MCF 10A (cell line): ENCODE measurements at regions of chr11 and their contacts with region 1.

Region 1: DNA sequence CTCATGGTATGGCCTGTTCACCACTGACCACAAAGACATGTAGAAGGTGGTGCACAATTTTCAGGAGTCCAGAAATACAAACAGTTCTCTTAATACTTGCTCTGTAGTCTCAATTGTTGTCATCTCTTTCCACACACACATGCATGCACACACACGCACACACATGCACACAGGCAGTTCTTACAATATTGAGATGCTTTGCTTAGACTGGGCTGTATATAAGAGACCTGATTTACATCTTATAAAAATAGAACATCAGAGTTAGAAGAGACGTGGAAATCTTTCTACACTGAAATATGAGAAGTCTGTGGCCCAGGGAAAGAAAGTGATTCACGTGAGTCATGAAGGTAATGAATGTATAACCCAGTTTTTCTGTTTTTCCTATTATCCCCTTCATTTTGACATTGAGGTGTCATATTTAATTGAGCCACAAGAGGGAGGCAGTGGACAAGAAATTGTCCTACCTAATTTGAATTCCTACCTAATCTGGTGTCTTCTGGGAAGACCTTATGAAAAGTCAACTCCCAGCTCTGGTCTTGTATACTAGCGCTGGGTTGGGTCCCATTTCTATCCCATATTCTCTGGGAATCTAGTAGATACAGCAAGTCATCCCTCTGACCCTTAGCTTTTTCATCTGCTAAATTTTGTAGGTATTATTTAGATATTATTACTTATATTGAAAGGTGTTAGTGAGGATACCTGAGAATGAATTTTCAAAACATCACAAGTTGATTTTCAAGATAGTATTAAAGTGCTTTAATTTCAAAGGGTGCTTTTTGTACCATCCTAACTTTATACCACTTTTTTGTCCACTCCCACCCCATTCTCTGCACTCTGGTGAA is 14.9 kb upstream of the MS4A4A start:
- DNase-seq: peak; percentile 66
- H3K4me3 Mint-ChIP-seq: no peak overlapping the region
- H3K27ac Mint-ChIP-seq: no peak overlapping the region
- H3K4me1 Mint-ChIP-seq: no peaks in the 10 kb centered on the region
- H3K27me3 Mint-ChIP-seq: peaks cover 12% of the 10 kb centered on the region
- CTCF ChIP-seq: peak; percentile 64

Region 2: DNA sequence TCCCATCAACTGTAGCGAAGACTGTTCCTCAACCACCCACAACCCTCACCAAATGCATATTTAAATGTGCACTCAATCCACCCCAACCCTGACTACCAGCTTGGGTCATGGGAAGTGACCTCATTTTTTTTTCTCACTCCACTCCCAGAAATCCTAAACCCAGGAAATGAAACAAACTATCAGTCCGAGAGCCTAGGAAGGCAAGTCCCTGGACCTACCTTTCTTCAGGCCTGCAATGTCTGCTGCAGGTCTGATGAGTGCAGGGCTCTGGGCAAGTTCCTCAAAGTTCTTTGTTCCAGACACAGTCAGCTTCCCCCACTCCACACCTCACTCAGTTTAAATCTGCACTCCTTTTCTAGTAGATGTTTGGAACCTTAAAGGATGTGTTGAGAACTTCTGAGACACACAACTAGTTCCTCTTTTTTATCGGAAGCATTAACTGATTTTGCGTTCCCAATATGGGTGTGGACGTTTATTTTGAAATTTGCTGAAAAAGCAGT is 22.8 kb before region 1 on chr11 and contains the start of gene MS4A4E:
- CTCF ChIA-PET with region 1: interaction called, 13 read pairs
- POLR2A ChIA-PET with region 1: no interaction called
- intact Hi-C with region 1: no loop called
- DNase-seq: no peak
- H3K4me3 Mint-ChIP-seq: no peak within 1 kb of the TSS
- H3K27ac Mint-ChIP-seq: no peak within 1 kb of the TSS
- H3K4me1 Mint-ChIP-seq: no peaks in the 10 kb centered on the region
- H3K27me3 Mint-ChIP-seq: peaks cover 60% of the 10 kb centered on the region
- CTCF ChIP-seq: no peak
- total RNA-seq, gene MS4A4E: not detected in 2 replicates

Region 3: GRCh38 chr11:60334005-60334620 is 68.5 kb after region 1 on chr11:
- CTCF ChIA-PET with region 1: interaction called, 11 read pairs
- POLR2A ChIA-PET with region 1: no interaction called
- intact Hi-C with region 1: no loop called
- DNase-seq: peak; percentile 76
- H3K4me3 Mint-ChIP-seq: no peak overlapping the region
- H3K27ac Mint-ChIP-seq: no peak overlapping the region
- H3K4me1 Mint-ChIP-seq: no peaks in the 10 kb centered on the region
- H3K27me3 Mint-ChIP-seq: peaks cover 23% of the 10 kb centered on the region
- CTCF ChIP-seq: peak; percentile 77

Region 4: DNA sequence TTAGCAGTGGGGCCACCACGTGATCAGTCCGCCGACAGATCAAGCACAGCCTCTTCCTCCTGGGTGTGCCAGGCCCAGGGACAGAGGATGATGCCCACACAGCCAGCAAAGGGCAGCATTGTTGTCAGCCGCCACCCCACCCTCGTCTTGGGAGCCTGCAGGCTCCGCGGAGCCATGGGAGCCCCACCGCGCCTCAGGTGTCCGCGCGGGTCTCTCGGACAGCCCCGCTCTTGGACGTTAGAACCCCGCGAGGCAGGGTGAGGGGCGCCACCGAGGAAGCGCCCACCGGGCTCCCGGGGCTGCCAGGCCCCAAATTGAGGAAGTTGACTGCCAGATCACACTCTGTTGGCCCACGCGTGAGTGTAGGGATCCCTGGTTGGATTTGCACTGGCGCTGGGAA is 349.9 kb after region 1 on chr11:
- CTCF ChIA-PET with region 1: interaction called, 34 read pairs
- POLR2A ChIA-PET with region 1: no interaction called
- intact Hi-C with region 1: loop called (anchors 1 kb)
- DNase-seq: no peak
- H3K4me3 Mint-ChIP-seq: no peak overlapping the region
- H3K27ac Mint-ChIP-seq: no peak overlapping the region
- H3K4me1 Mint-ChIP-seq: no peaks in the 10 kb centered on the region
- H3K27me3 Mint-ChIP-seq: peaks cover 29% of the 10 kb centered on the region
- CTCF ChIP-seq: no peak

Region 5: DNA sequence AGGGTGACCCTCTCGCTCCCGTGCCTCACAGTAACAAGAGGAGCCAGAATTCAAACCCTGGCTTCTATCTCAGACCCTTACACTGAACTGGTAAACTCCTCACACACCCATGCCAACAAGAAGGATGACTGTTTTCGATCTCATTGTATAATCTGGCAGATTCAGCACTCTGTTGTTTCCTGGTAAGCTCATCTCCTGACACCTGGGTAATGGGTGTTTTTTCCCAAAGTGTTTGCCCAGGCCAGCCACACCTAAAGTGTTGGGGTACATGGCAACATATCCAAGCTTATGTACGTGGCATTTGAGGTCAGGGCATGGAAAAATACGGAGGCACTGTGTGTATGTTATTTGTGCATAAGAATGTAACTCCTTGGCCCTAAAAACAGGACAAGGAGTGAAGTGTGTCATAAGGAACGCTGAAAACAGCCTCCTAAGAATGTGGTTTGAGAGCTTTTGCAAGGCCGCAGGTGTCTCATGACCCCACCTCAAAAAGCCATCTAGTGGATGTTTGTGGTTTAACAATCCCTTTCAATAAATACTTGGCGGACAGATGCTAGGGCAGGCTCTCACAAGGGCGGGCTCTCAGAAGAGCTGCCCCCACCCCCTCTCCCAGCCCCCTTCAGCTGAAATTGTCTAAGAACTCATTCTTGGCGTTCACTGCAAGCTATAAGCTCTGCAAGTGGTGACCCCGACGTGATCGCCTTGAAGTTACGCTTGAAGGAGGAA is 490.9 kb after region 1 on chr11 and contains the start of gene MS4A15:
- CTCF ChIA-PET with region 1: interaction called, 6 read pairs
- POLR2A ChIA-PET with region 1: no interaction called
- intact Hi-C with region 1: loop called (anchors 1 kb)
- DNase-seq: peak; percentile 52
- H3K4me3 Mint-ChIP-seq: no peak within 1 kb of the TSS
- H3K27ac Mint-ChIP-seq: no peak within 1 kb of the TSS
- H3K4me1 Mint-ChIP-seq: no peaks in the 10 kb centered on the region
- H3K27me3 Mint-ChIP-seq: peaks cover 53% of the 10 kb centered on the region
- CTCF ChIP-seq: peak; percentile 36
- total RNA-seq, gene MS4A15: not detected in 2 replicates